ENCODE measurements at regions of chr9 and their contacts with region 1.

Region 1: DNA sequence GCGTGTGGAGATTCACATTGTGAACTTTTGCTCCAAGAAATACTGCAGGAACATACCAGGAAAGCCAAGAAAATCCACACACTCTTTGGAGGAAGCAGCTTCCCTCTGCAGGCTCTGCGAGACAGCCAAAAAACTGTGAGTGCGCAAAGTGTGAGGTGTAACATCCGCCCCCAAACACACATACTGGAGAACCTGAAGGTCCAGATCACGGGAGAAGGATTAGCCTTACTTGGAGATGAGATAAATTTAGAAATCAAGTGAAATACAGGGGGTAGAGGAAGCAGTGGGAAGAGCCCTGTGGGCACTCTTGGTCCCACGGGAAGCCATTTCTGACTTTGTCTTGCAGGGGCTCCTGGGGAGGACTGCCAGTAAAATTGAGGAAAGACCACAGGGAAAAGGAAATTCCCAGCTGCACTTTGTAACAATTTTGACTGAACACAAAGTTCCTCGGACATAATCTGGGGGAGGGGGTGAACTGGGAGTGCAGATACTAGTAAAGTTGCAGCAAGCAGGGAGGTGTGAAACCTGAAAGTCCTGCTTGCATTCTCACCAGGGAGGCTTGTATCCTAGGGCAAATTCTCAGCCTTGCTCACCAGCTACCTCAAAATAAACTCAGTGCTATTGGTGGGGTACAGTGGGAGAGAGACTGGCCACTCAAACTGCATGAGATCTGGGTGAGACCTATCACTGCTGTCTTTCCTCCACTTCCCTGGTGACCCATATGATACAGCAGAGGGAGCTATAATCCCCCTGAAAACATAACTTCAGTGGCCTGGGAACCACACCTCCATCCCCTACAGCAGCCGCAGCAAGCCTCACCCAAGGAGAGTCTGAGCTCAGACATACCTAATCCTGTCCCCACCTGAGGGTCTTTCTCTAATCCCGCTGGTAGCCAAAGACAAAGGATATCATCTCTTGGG is 109.1 kb downstream of the ALDH1A1 start:
- DNase-seq: peak; percentile 74
- ATAC-seq: peak; percentile 100
- H3K4me3 ChIP-seq: peak overlapping the region; percentile 32 to 49 (median 40)
- H3K27ac ChIP-seq: peak overlapping the region; percentile 31
- H3K4me1 ChIP-seq: peaks cover 22% of the 10 kb centered on the region
- H3K27me3 ChIP-seq: no peaks in the 10 kb centered on the region
- CTCF ChIP-seq: peak; percentile 82
- EP300 ChIP-seq: no peak
- POLR2A ChIP-seq: no peak
- RAD21 ChIP-seq: peak; percentile 73; the same call in 1 of the 2 replicates

Region 2: DNA sequence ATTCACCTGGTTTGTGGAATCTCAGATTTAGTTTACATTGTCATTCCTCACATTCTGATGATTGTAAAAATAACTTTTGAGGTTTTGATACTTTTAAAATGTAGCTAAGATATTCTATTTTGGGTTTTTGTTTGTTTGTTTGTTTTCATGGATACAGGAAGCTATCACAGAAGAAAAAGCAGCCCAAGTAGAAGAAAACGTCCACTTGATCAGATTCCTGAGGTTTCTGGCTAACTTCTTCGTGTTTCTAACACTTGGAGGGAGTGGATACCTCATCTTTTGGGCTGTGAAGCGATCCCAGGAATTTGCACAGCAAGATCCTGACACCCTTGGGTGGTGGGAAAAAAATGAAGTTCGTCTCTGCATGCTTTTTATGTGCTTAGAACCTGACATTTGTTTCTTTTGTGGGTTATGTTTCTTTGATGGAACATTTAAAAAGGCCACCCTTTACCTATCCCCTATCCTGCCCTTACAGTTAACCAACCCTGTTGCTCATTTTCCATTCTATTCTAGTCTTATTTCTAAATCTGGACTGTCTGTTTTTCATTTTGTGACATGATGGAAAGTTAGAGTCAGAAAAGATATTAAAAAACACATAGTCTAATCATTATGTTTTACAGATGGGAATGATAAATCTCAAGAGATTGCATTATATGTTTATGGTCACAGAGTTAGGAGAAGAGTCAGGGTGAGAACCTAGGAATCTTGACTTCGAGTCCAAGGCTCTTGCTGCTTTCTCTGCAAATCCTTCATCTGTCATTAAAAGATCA is 54.6 kb before region 1 on chr9:
- CTCF ChIA-PET with region 1: no interaction called
- POLR2A ChIA-PET with region 1: no interaction called
- in situ Hi-C with region 1: no loop called
- intact Hi-C with region 1: no loop called
- DNase-seq: no peak
- ATAC-seq: no peak
- H3K4me3 ChIP-seq: no peak overlapping the region
- H3K27ac ChIP-seq: no peak overlapping the region
- H3K4me1 ChIP-seq: no peaks in the 10 kb centered on the region
- H3K27me3 ChIP-seq: peaks cover 0 to 3% of the 10 kb centered on the region in 2 experiments; a peak in 1 of 5 replicates
- CTCF ChIP-seq: no peak
- EP300 ChIP-seq: no peak
- POLR2A ChIP-seq: no peak
- RAD21 ChIP-seq: no peak

Region 3: DNA sequence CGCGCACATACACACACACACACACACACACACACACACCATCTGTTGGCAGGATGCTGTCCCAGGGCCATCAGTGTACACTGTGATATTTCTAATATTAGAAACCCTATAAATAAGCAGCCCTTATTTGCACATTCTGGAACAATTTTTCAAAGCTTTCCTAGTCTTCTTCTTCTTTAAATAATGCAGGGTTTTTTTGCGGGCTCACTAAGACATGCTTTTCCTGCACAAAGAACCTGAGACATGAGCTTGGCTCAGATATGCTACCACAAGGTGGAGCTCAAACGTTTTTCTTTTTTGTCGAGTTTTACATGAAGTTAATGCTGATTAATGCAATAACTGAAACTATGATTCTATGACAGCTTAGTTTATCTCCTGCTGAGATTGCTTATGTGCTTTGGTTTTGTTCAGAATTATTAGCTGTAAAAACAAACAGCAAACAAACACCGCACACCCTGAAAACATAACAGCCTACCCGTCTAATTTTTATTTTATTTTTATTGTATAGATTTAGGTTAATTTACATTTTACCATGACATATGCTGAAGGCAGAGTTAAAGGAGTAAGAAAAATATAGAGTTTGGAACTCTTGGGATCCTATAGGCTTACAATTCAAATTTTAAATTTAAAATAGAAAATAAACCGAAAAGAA is 13.3 kb after region 1 on chr9:
- CTCF ChIA-PET with region 1: no interaction called
- POLR2A ChIA-PET with region 1: interaction called, 11 read pairs
- in situ Hi-C with region 1: no loop called
- intact Hi-C with region 1: no loop called
- DNase-seq: peak; percentile 65
- ATAC-seq: no peak
- H3K4me3 ChIP-seq: no peak overlapping the region
- H3K27ac ChIP-seq: peak overlapping the region; percentile 99
- H3K4me1 ChIP-seq: peaks cover 30% of the 10 kb centered on the region
- H3K27me3 ChIP-seq: no peaks in the 10 kb centered on the region
- CTCF ChIP-seq: peak; percentile 70
- EP300 ChIP-seq: no peak
- POLR2A ChIP-seq: no peak
- RAD21 ChIP-seq: peak; percentile 43; the same call in 1 of the 2 replicates

Region 4: DNA sequence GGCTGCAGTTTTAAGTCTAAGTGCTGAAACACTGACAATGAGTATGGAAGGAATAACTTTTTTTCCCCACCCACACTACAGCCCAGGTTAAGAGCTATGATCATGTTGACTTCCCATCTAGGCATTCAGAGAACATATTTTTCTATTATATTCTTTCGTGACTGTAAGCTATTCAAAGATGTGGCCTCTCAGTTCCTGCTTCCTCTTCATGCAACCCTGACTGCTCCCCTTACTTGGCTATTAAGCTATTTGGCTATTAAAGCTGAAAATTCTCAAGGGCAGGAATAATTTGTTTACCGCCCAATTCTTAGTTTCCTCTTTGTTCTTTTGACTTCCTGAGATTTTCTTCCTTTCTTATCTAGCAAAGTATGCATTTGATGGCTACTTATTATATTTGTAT is 127.6 kb after region 1 on chr9:
- CTCF ChIA-PET with region 1: no interaction called
- POLR2A ChIA-PET with region 1: no interaction called
- in situ Hi-C with region 1: no loop called
- intact Hi-C with region 1: no loop called
- DNase-seq: no peak
- ATAC-seq: no peak
- H3K4me3 ChIP-seq: no peak overlapping the region
- H3K27ac ChIP-seq: no peak overlapping the region
- H3K4me1 ChIP-seq: no peaks in the 10 kb centered on the region
- H3K27me3 ChIP-seq: no peaks in the 10 kb centered on the region
- CTCF ChIP-seq: no peak
- EP300 ChIP-seq: no peak
- POLR2A ChIP-seq: no peak
- RAD21 ChIP-seq: no peak